H1 (cell line): ENCODE measurements at regions of chr11 and their contacts with region 1.

Region 1: GRCh38 chr11:62665075-62665598 is at the starts of genes C11orf98 and CSKMT:
- DNase-seq: peak; percentile 79 to 99
- H3K4me3 ChIP-seq: peak within 1 kb of the TSS; percentile 83 to 98 (median 95)
- H3K27ac ChIP-seq: peak within 1 kb of the TSS; percentile 81
- H3K4me1 ChIP-seq: peaks cover 4 to 11% (median 8%) of the 10 kb centered on the region in 4 experiments
- H3K27me3 ChIP-seq: no peaks in the 10 kb centered on the region
- CTCF ChIP-seq: no peak; a peak in 1 of 4 replicates
- EP300 ChIP-seq: peak in 1 of 2 experiments; percentile 71; a peak in 1 of 3 replicates
- POLR2A ChIP-seq: peak; percentile 100
- RAD21 ChIP-seq: no peak; a peak in 1 of 4 replicates
- total RNA-seq, gene C11orf98: 171 and 173 TPM in 2 replicates
- total RNA-seq, gene CSKMT: 66.1 and 67.8 TPM in 2 replicates

Region 2: GRCh38 chr11:62411524-62411923 is 253.6 kb before region 1 on chr11:
- CTCF ChIA-PET with region 1: no interaction called
- POLR2A ChIA-PET with region 1: no interaction called
- DNase-seq: no peak
- H3K4me3 ChIP-seq: no peak overlapping the region
- H3K27ac ChIP-seq: no peak overlapping the region
- H3K4me1 ChIP-seq: 0 out of 7 replicates have a peak, but pooled peaks cover 0 to 2% (median 0%) of the 10 kb centered on the region in 4 experiments
- H3K27me3 ChIP-seq: no peaks in the 10 kb centered on the region
- CTCF ChIP-seq: no peak
- EP300 ChIP-seq: no peak
- POLR2A ChIP-seq: no peak
- RAD21 ChIP-seq: no peak

Region 3: GRCh38 chr11:62464649-62465048 is 200.5 kb before region 1 on chr11:
- CTCF ChIA-PET with region 1: no interaction called
- POLR2A ChIA-PET with region 1: no interaction called
- DNase-seq: no peak
- H3K4me3 ChIP-seq: no peak overlapping the region
- H3K27ac ChIP-seq: no peak overlapping the region
- H3K4me1 ChIP-seq: no peaks in the 10 kb centered on the region
- H3K27me3 ChIP-seq: no peaks in the 10 kb centered on the region; a peak in 1 of 7 replicates
- CTCF ChIP-seq: no peak
- EP300 ChIP-seq: no peak
- POLR2A ChIP-seq: no peak
- RAD21 ChIP-seq: no peak

Region 4: DNA sequence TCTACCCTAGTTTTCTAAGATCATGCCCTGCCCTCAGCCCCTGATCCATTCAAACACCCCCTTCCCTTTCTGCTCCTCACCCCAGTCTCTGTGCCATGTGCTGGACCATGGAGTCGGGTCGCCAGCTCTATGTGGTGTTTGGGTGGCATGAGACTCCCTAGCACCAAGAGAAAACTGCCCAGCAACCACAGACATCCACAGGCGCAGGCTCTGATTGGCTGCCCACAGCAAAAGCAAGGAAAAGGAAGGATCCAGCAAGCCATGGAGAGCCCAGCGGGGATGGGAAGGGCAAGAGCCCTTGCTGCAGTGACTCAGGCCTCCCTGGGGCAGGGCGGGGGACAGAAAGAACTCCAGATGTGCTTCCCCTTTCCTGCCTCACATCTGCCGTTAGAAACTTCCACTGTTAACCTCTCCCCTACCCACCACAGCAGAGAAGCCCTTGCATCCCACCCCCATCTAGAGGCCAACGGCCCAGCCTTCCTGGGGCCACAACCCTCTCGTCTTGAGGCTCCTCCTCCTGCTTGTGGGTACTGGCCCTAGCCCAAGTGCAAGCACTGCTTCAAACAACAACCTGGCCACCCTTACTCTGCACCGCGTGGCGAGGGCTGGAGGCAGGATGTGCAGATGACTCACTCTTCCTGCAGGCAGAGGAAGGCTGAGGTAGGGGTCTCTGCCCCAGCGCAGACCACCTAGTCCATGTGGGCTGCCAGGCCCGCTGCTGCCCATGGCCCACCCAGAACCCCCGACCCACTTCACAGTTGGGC is 108.8 kb before region 1 on chr11:
- CTCF ChIA-PET with region 1: interaction called, 4 read pairs
- POLR2A ChIA-PET with region 1: interaction called, 19 read pairs
- DNase-seq: peak; percentile 63 to 77
- H3K4me3 ChIP-seq: no peak overlapping the region
- H3K27ac ChIP-seq: peak overlapping the region; percentile 67
- H3K4me1 ChIP-seq: peaks cover 32 to 68% (median 39%) of the 10 kb centered on the region in 4 experiments
- H3K27me3 ChIP-seq: no peaks in the 10 kb centered on the region
- CTCF ChIP-seq: no peak
- EP300 ChIP-seq: no peak
- POLR2A ChIP-seq: peak; percentile 20 to 36; a peak in 2 of 3 replicates
- RAD21 ChIP-seq: no peak

Region 5: GRCh38 chr11:62601394-62602140 is 63.6 kb before region 1 on chr11 and contains the start of gene MTA2:
- CTCF ChIA-PET with region 1: interaction called, 3 read pairs
- POLR2A ChIA-PET with region 1: interaction called, 36 read pairs
- DNase-seq: peak; percentile 98 to 100
- H3K4me3 ChIP-seq: peak within 1 kb of the TSS; percentile 74 to 86 (median 84)
- H3K27ac ChIP-seq: peak within 1 kb of the TSS; percentile 79
- H3K4me1 ChIP-seq: peaks cover 7 to 32% (median 17%) of the 10 kb centered on the region in 4 experiments
- H3K27me3 ChIP-seq: peaks cover 0 to 13% (median 11%) of the 10 kb centered on the region in 4 experiments; a peak in 6 of 7 replicates
- CTCF ChIP-seq: no peak
- EP300 ChIP-seq: no peak
- POLR2A ChIP-seq: peak in 1 of 2 experiments; percentile 78; a peak in 2 of 3 replicates
- RAD21 ChIP-seq: no peak
- total RNA-seq, gene MTA2: 114 and 117 TPM in 2 replicates

Region 6: GRCh38 chr11:62621567-62622470 is 43.3 kb before region 1 on chr11 and contains the start of gene B3GAT3:
- CTCF ChIA-PET with region 1: interaction called, 4 read pairs
- POLR2A ChIA-PET with region 1: interaction called, 74 read pairs
- DNase-seq: peak; percentile 97 to 98
- H3K4me3 ChIP-seq: peak within 1 kb of the TSS; percentile 59 to 87 (median 83)
- H3K27ac ChIP-seq: peak within 1 kb of the TSS; percentile 46
- H3K4me1 ChIP-seq: peaks cover 0 to 5% (median 0%) of the 10 kb centered on the region in 4 experiments; a peak in 1 of 7 replicates
- H3K27me3 ChIP-seq: no peaks in the 10 kb centered on the region
- CTCF ChIP-seq: peak in 1 of 3 experiments; percentile 7; a peak in 1 of 4 replicates
- EP300 ChIP-seq: no peak
- POLR2A ChIP-seq: peak in 1 of 2 experiments; percentile 96; a peak in 2 of 3 replicates
- RAD21 ChIP-seq: peak; percentile 0; a peak in 2 of 4 replicates
- total RNA-seq, gene B3GAT3: 28.0 and 34.5 TPM in 2 replicates

Region 7: DNA sequence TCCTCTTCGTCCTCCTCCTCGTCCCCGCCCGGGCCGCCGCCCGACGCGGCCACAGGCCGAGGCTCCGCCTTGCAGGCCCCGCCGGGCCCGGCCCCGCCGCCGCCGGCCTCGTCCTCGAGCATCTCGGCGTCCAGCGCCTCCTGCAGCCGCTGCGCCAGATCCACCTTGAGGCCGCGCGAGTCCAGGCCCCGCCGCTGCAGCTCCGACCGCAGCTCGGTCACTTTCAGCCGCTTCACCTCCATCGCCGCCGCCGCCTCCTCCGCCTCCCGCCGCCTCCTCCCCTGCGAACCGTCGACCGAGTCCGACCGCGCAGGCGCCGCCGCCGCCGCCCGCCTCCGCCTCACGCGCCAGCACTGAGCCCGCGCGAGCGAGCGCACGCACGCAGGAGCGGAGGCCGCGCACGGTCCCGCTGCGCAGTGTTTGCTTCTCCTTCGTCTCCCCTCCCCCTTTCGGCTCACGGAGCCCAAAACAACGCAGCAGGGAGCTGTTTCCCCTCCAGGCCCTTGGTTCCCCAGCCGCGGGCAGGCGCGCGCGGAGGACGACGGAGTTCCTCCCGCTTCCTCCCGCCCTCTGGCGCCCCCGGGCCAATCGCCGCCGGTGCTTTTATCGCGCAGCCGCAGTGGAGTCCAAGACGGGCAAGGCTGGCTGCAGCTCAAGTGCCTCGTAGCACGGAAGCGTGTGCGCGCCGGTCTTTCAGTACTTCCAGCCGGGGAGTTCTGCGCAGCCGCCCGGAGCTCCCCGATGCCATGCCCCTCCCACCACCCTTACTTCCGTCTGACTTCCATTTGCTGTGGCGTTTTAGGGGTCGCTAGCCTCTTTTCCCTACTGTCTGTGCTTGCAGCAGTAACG is 62.0 kb after region 1 on chr11 and contains the start of gene HNRNPUL2:
- CTCF ChIA-PET with region 1: no interaction called
- POLR2A ChIA-PET with region 1: interaction called, 2,041 read pairs
- DNase-seq: peak; percentile 94 to 97
- H3K4me3 ChIP-seq: peak within 1 kb of the TSS; percentile 87 to 98 (median 96)
- H3K27ac ChIP-seq: peak within 1 kb of the TSS; percentile 92
- H3K4me1 ChIP-seq: no peaks in the 10 kb centered on the region; a peak in 3 of 7 replicates
- H3K27me3 ChIP-seq: no peaks in the 10 kb centered on the region
- CTCF ChIP-seq: no peak
- EP300 ChIP-seq: 0 out of 3 replicates have a peak, but pooled peaks of 1 of the 2 experiments have one; percentile 25
- POLR2A ChIP-seq: peak; percentile 90
- RAD21 ChIP-seq: no peak
- total RNA-seq, gene HNRNPUL2: 44.3 and 46.4 TPM in 2 replicates

Region 8: DNA sequence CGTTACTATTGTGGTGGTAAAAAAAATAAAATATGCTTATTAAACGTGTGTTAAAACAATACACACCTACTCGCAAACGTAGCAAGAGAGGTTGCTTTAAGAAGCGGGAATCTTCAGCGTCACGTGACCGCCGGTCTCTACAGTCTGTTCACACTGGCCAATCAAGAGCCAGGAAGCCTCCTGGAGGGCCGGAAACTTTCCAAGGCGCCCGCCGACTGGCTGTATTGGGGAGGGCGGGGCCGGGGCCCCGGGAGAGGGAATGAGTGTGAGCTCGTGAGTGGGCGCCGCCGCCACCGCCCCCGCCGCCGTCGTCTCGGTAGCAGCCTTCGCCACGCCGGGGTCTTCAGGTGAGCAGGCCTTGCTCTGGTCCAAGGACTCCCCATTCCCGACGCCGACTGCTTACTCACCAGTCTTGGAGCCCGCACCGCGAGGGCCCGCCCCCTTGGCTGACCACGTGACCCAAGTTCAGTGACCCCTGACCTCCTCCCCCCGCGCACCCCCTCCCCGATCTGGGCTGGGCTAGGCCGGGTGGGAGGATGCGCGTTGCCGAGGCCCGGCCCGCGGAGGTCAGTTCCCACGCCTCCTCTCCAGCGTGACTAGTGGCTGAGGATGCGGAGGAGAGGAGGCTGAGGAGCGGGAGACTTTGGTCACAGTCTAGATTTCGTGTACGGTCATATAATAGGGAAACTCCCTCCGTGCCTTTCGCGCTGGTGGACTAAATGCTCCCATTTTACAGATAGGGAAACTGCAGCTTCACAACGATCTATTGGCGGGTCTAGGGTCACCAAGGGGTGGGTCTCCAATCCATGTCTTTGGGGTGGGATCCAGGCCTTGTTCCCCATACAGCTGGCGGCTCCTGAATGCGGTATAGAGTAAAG is 106.2 kb after region 1 on chr11 and contains the start of gene TAF6L:
- CTCF ChIA-PET with region 1: interaction called, 3 read pairs
- POLR2A ChIA-PET with region 1: interaction called, 35 read pairs
- DNase-seq: peak; percentile 75 to 98
- H3K4me3 ChIP-seq: peak within 1 kb of the TSS; percentile 77 to 95 (median 92)
- H3K27ac ChIP-seq: peak within 1 kb of the TSS; percentile 72
- H3K4me1 ChIP-seq: peaks cover 0 to 9% (median 5%) of the 10 kb centered on the region in 4 experiments; a peak in 6 of 7 replicates
- H3K27me3 ChIP-seq: no peaks in the 10 kb centered on the region
- CTCF ChIP-seq: no peak
- EP300 ChIP-seq: no peak
- POLR2A ChIP-seq: peak; percentile 78 to 95
- RAD21 ChIP-seq: no peak
- total RNA-seq, gene TAF6L: 29.6 and 31.9 TPM in 2 replicates

Region 9: GRCh38 chr11:62816557-62816956 is 151.4 kb after region 1 on chr11:
- CTCF ChIA-PET with region 1: no interaction called
- POLR2A ChIA-PET with region 1: no interaction called
- DNase-seq: no peak
- H3K4me3 ChIP-seq: no peak overlapping the region
- H3K27ac ChIP-seq: no peak overlapping the region
- H3K4me1 ChIP-seq: no peaks in the 10 kb centered on the region
- H3K27me3 ChIP-seq: no peaks in the 10 kb centered on the region
- CTCF ChIP-seq: no peak
- EP300 ChIP-seq: no peak
- POLR2A ChIP-seq: no peak
- RAD21 ChIP-seq: no peak

Region 10: DNA sequence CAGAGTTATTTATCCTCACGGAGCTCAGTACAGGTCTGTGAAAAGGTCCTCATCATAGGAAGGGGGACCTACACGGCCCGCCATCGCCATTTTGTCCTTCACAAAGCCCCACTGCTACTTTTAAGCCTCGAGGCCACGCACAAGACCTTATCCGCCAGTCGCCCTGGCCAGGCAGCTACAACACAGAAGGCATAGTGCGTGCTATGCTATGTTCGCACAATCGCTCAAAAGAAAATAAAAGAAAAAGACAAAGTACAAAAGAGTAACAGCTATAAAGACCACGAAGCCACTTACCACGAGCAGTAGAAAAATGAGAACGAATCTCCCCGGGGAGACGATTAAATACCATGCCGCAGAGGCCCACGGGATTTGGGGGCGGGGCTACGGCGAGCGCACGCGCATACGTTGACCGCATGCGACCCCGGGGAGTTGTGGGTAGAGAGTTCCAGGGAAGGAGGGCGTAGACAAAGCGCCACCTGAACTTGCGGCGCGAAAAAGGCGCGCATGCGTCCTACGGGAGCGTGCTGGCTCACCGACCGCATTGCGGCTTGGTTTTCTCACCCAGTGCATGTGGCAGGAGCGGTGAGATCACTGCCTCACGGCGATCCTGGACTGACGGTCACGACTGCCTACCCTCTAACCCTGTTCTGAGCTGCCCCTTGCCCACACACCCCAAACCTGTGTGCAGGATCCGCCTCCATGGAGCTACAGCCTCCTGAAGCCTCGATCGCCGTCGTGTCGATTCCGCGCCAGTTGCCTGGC is 190.6 kb after region 1 on chr11:
- CTCF ChIA-PET with region 1: no interaction called
- POLR2A ChIA-PET with region 1: interaction called, 27 read pairs
- DNase-seq: peak; percentile 98 to 99
- H3K4me3 ChIP-seq: peak overlapping the region; percentile 74 to 100 (median 90)
- H3K27ac ChIP-seq: peak overlapping the region; percentile 96
- H3K4me1 ChIP-seq: peaks cover 4 to 7% (median 7%) of the 10 kb centered on the region in 4 experiments; a peak in 4 of 7 replicates
- H3K27me3 ChIP-seq: no peaks in the 10 kb centered on the region
- CTCF ChIP-seq: no peak
- EP300 ChIP-seq: no peak
- POLR2A ChIP-seq: peak; percentile 98 to 99
- RAD21 ChIP-seq: no peak